ENCODE measurements at regions of chr2 and their contacts with region 1.

Region 1: GRCh38 chr2:72993147-72993932 is 76.0 kb downstream of the EMX1 start:
- DNase-seq: peak; percentile 26 to 65
- H3K4me3 ChIP-seq: no peak overlapping the region
- H3K27ac ChIP-seq: no peak overlapping the region
- H3K4me1 ChIP-seq: no peaks in the 10 kb centered on the region
- H3K27me3 ChIP-seq: no peaks in the 10 kb centered on the region
- CTCF ChIP-seq: peak in 5 of 7 experiments; percentile 45 to 92 (median 76)
- EP300 ChIP-seq: no peak
- POLR2A ChIP-seq: no peak

Region 2: GRCh38 chr2:73163483-73164367 is 170.4 kb after region 1 on chr2:
- intact Hi-C with region 1: loop called (anchors 5 kb)
- DNase-seq: peak; percentile 72 to 88
- H3K4me3 ChIP-seq: no peak overlapping the region
- H3K27ac ChIP-seq: no peak overlapping the region
- H3K4me1 ChIP-seq: no peaks in the 10 kb centered on the region
- H3K27me3 ChIP-seq: peaks cover 0 to 16% (median 0%) of the 10 kb centered on the region in 3 donors
- CTCF ChIP-seq: peak in 5 of 7 experiments; percentile 51 to 85 (median 79)
- EP300 ChIP-seq: no peak
- POLR2A ChIP-seq: no peak

Region 3: GRCh38 chr2:73457982-73458381 is 464.6 kb after region 1 on chr2:
- intact Hi-C with region 1: no loop called
- DNase-seq: no peak
- H3K4me3 ChIP-seq: no peak overlapping the region
- H3K27ac ChIP-seq: no peak overlapping the region
- H3K4me1 ChIP-seq: no peaks in the 10 kb centered on the region
- H3K27me3 ChIP-seq: no peaks in the 10 kb centered on the region
- CTCF ChIP-seq: no peak
- EP300 ChIP-seq: no peak
- POLR2A ChIP-seq: no peak